Activated CD8-positive, alpha-beta memory T cell treated with anti-CD3 and anti-CD28 coated beads, Interleukin-2, amount 10 ng/mL, durations not matched to agents 7 days and 5 days (primary cell): ENCODE measurements at regions of chr22 and their contacts with region 1.

Region 1: GRCh38 chr22:31661851-31662656 is at the start of gene PISD:
- DNase-seq: peak; percentile 98
- ATAC-seq: peak; percentile 91
- H3K4me3 Mint-ChIP-seq: peak within 1 kb of the TSS; percentile 92
- H3K27ac Mint-ChIP-seq: peak within 1 kb of the TSS; percentile 91
- H3K4me1 Mint-ChIP-seq: peaks cover 40% of the 10 kb centered on the region
- H3K27me3 Mint-ChIP-seq: no peaks in the 10 kb centered on the region
- total RNA-seq, gene PISD: 34.7 to 40.0 TPM

Region 2: DNA sequence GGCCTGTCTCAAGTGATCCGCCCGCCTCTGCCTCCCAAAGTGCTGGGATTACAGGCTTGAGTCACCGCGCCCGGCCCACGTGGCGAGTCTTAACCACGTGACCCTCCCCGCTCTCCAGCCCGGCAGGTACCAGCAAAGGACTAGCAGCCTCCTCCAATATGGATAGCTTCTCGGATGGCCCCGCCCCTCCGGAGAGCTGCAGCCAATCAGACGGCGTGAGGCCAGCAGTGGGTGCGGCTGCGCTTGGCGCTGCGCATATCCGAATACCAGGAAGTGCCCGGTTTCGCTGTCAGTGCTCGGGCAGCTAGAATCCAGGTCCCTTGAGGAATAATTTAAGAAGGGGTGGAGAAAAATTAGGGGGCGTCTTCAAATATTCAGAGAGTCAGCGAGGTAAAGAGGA is 14.6 kb after region 1 on chr22:
- CTCF ChIA-PET with region 1: interaction called, 107 read pairs
- DNase-seq: peak; percentile 97
- ATAC-seq: peak; percentile 100
- H3K4me3 Mint-ChIP-seq: peak overlapping the region; percentile 87
- H3K27ac Mint-ChIP-seq: peak overlapping the region; percentile 89
- H3K4me1 Mint-ChIP-seq: peaks cover 17% of the 10 kb centered on the region
- H3K27me3 Mint-ChIP-seq: no peaks in the 10 kb centered on the region

Region 3: GRCh38 chr22:31944700-31945474 is 282.8 kb after region 1 on chr22:
- CTCF ChIA-PET with region 1: interaction called, 39 read pairs
- DNase-seq: peak; percentile 55
- ATAC-seq: peak; percentile 24
- H3K4me3 Mint-ChIP-seq: no peak overlapping the region
- H3K27ac Mint-ChIP-seq: peak overlapping the region; percentile 35
- H3K4me1 Mint-ChIP-seq: peaks cover 38% of the 10 kb centered on the region
- H3K27me3 Mint-ChIP-seq: no peaks in the 10 kb centered on the region

Region 4: GRCh38 chr22:31958625-31959239 is 296.7 kb after region 1 on chr22:
- CTCF ChIA-PET with region 1: interaction called, 11 read pairs
- DNase-seq: no peak
- ATAC-seq: peak; percentile 33
- H3K4me3 Mint-ChIP-seq: no peak overlapping the region
- H3K27ac Mint-ChIP-seq: peak overlapping the region; percentile 26
- H3K4me1 Mint-ChIP-seq: peaks cover 41% of the 10 kb centered on the region
- H3K27me3 Mint-ChIP-seq: peaks cover 3% of the 10 kb centered on the region

Region 5: DNA sequence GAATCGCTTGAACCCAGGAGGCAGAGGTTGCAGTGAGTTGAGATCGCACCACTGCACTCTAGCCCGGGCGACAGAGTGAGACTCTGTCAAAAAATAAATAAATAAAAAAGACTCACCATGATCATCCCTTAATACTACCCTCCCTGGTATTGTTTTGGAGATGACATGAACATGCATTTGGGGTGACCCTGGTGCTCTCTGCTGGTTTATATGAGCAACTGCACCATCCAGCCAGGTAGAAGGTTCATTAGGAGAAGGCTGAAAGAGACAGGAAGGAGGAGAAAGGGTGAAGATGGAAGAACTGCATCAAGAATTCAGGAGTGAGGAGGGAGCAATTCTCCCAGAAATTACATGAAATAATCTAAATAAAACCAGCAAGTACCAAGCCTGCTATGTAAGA is 418.9 kb after region 1 on chr22:
- CTCF ChIA-PET with region 1: interaction called, 10 read pairs
- DNase-seq: no peak
- ATAC-seq: peak; percentile 67
- H3K4me3 Mint-ChIP-seq: no peak overlapping the region
- H3K27ac Mint-ChIP-seq: no peak overlapping the region
- H3K4me1 Mint-ChIP-seq: peaks cover 5% of the 10 kb centered on the region
- H3K27me3 Mint-ChIP-seq: peaks cover 26% of the 10 kb centered on the region